Tibial artery (tissue), 4 donors: ENCODE measurements at regions of chr20 and their contacts with region 1.

Region 1: DNA sequence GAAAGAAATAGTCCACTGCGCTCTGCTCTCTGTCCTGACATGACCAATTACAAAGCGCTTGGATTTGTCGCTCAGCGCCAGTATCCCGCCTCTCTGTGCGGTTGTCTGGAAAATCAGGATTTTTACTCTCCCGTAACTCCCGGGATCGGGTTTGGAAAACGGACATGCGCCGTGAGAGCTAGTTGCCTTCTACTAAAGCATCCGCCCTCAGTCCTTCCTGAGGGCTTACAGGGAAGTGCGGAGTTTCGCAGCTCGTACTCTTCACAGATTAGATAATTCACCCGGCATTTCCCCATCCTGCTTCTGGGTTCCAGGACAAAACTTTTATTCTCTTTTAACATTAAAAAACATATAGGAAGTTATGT is 427 bp upstream of the MKKS start:
- DNase-seq: peak; percentile 93 to 98
- H3K4me3 ChIP-seq: peak overlapping the region; percentile 69 to 85
- H3K27ac ChIP-seq: peak overlapping the region; percentile 82 to 87
- H3K4me1 ChIP-seq: peaks cover 0 to 27% (median 13%) of the 10 kb centered on the region in 4 donors
- H3K27me3 ChIP-seq: no peaks in the 10 kb centered on the region
- CTCF ChIP-seq: no peak

Region 2: DNA sequence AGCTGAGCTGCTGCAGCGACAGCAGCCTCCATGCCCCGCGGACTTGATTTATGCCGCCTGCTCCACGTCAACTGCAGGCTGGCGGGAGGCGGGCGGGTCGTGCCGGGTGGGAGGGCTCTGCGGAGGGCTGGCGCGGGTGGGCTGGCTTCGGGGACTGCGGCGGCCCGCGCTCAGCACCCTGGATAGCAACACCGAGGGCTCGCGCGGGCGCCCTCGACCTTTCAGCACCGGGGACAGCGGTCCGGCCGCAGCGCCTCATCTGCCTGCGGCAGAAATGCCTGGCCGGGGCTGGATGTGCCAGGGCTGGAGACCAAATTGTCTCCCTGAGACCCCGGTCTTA is 215.0 kb before region 1 on chr20:
- intact Hi-C with region 1: loop called (anchors 10 kb)
- DNase-seq: peak; percentile 63 to 84
- H3K4me3 ChIP-seq: peak overlapping the region; percentile 49 to 56
- H3K27ac ChIP-seq: peak overlapping the region; percentile 72 to 80
- H3K4me1 ChIP-seq: peaks cover 0 to 13% (median 4%) of the 10 kb centered on the region in 4 donors
- H3K27me3 ChIP-seq: peaks cover 0 to 22% of the 10 kb centered on the region in 2 donors
- CTCF ChIP-seq: no peak